ENCODE measurements at regions of chr15 and their contacts with region 1.

Region 1: DNA sequence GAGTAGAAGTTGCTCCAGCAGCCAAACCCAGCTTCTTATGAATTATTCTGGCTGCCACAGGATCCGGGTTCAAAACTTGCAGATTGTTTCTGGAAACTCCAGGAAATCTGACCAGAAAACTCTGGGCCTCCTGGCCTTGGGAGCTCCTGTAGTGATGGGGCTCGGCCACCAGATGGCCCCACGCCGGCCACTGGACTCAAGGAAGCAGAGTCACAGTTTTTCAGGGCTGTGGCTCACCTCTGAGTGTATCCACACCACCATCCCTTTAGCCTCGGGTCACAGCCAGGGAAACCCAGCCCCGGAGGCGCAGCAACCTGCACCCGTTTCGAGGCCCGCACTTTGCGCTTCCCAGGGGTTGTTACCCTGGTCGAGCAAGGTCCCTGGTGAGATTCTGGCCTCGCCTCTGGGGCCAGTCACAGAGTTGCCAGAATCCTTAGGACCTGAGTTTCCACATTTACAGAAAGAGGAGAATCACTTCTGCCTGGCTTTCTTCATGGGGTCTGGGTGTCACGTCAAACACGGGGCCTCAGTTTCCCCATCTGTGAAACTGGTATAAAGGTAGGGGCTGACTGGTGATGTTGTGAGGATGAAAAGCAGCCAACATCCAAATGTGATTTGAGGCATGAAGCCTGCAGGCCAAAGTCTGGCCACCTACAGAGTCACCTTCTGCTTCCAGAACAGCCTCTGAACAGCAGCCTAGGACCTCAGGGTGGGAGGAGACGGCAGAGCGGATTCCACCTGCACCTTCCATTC is 53.5 kb upstream of the LCTL start:
- DNase-seq: no peak
- ATAC-seq: peak; percentile 94
- H3K4me3 ChIP-seq: no peak overlapping the region
- H3K27ac ChIP-seq: no peak overlapping the region
- H3K4me1 ChIP-seq: peaks cover 3% of the 10 kb centered on the region; the same call in 1 of the 2 replicates
- H3K27me3 ChIP-seq: peaks cover 0 to 6% of the 10 kb centered on the region in 2 experiments; a peak in 2 of 4 replicates
- CTCF ChIP-seq: peak; percentile 78 to 90 (median 81)
- EP300 ChIP-seq: no peak
- POLR2A ChIP-seq: no peak
- RAD21 ChIP-seq: peak; percentile 66

Region 2: GRCh38 chr15:66515901-66516322 is 103.4 kb before region 1 on chr15:
- CTCF ChIA-PET with region 1: no interaction called
- POLR2A ChIA-PET with region 1: no interaction called
- RAD21 ChIA-PET with region 1: no interaction called
- SMC1A ChIA-PET with region 1: no interaction called
- in situ Hi-C with region 1: no loop called
- intact Hi-C with region 1: no loop called
- DNase-seq: no peak
- ATAC-seq: no peak
- H3K4me3 ChIP-seq: no peak overlapping the region
- H3K27ac ChIP-seq: no peak overlapping the region
- H3K4me1 ChIP-seq: no peaks in the 10 kb centered on the region
- H3K27me3 ChIP-seq: no peaks in the 10 kb centered on the region
- CTCF ChIP-seq: no peak
- EP300 ChIP-seq: no peak
- POLR2A ChIP-seq: no peak
- RAD21 ChIP-seq: no peak

Region 3: DNA sequence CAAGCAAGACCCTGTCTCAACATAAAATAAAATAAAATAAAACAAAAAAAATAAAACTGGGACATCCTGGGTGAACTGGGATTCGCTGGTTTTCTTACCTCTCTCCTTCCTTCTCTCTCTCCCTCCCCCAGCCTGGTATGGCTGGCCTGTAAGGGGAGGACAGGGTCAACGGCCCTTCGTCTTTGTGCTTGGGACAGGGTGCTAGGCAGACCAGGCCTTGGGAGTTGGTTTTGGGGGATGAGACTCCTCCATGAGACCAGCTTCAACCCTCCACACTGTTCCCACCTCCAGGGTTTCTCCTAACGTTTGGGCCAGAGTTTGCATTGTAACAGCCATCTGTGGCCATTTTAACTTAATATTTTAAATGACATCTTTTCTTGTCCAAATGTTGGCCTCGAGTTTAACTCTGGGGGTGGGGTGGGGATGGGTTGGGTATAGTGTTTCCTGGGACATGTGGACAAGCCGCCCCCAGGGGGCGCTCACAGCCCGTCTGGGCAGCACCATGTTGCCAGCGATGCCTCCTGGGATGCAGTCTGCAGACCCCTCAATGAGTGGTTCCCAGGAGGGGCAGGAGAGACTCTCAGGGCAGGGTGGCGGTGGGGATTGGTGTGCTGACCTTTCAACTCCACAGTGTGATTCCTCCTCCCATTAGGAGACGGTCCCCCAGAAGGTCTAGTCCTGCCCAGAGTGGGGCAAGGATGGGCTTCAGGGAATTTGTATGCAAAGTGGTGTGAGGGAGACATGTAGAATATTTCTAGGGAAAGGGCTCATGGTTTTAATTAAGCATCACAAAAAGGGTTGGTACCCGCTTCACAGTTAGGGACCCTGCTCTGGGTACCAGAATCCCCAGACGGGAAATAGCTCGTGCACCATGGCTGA is 15.8 kb before region 1 on chr15:
- CTCF ChIA-PET with region 1: interaction called, 16 read pairs
- POLR2A ChIA-PET with region 1: no interaction called
- RAD21 ChIA-PET with region 1: interaction called, 5 read pairs
- SMC1A ChIA-PET with region 1: no interaction called
- in situ Hi-C with region 1: no loop called
- intact Hi-C with region 1: no loop called
- DNase-seq: no peak
- ATAC-seq: peak; percentile 98
- H3K4me3 ChIP-seq: no peak overlapping the region
- H3K27ac ChIP-seq: no peak overlapping the region
- H3K4me1 ChIP-seq: no peaks in the 10 kb centered on the region
- H3K27me3 ChIP-seq: no peaks in the 10 kb centered on the region; a peak in 1 of 4 replicates
- CTCF ChIP-seq: peak; percentile 76 to 91 (median 86)
- EP300 ChIP-seq: no peak
- POLR2A ChIP-seq: no peak
- RAD21 ChIP-seq: peak; percentile 80

Region 4: GRCh38 chr15:66700802-66701421 is 81.6 kb after region 1 on chr15:
- CTCF ChIA-PET with region 1: interaction called, 7 read pairs
- POLR2A ChIA-PET with region 1: no interaction called
- RAD21 ChIA-PET with region 1: no interaction called
- SMC1A ChIA-PET with region 1: no interaction called
- in situ Hi-C with region 1: no loop called
- intact Hi-C with region 1: loop called (anchors 10 kb)
- DNase-seq: no peak
- ATAC-seq: peak; percentile 86
- H3K4me3 ChIP-seq: peak overlapping the region; percentile 93
- H3K27ac ChIP-seq: no peak overlapping the region
- H3K4me1 ChIP-seq: peaks cover 16% of the 10 kb centered on the region
- H3K27me3 ChIP-seq: peaks cover 11 to 15% of the 10 kb centered on the region in 2 experiments
- CTCF ChIP-seq: no peak
- EP300 ChIP-seq: no peak
- POLR2A ChIP-seq: no peak; the same call in 1 of the 2 replicates
- RAD21 ChIP-seq: no peak